WTC11 (cell line): ENCODE measurements at regions of chr3 and their contacts with region 1.

Region 1: GRCh38 chr3:151379083-151379734 is 5.3 kb downstream of the P2RY12 start:
- DNase-seq: peak; percentile 66
- ATAC-seq: peak; percentile 98
- H3K4me3 Mint-ChIP-seq: no peak overlapping the region
- H3K27ac Mint-ChIP-seq: peak overlapping the region; percentile 80
- H3K4me1 Mint-ChIP-seq: peaks cover 5% of the 10 kb centered on the region
- H3K27me3 Mint-ChIP-seq: no peaks in the 10 kb centered on the region
- CTCF ChIP-seq: no peak

Region 2: DNA sequence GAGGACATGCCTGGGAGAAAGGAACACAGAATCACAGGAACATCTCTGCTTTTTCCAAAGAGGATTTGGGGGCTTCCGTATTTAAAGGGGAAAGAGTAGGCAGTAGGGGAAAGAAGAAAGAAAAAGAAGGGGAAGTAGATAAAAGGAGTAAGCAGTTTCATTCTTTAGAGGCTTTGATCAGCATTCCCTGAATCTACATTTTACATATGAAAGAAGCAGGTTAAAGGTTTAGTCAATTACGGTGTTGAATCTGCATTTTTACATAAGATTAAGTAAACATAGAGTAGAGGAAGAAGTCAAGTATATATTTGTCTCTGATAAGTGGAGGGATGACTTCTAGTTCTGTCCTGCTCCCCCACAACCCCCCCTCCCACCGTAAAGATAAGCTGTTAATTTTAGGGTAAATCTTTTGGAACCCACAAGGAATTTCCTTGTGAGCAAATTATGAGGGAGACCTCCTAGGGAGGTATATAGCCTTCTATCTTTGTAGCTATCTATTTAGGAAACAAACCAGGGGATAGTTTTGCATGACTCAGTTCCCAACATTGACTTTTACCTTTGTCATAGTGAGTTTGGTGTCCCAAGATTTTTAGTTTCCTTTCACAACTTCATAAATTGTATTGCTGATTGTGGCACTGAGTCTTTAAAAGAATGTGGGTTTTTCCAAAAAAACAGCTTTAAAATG is 14.1 kb after region 1 on chr3:
- CTCF ChIA-PET with region 1: interaction called, 17 read pairs
- POLR2A ChIA-PET with region 1: interaction called, 5 read pairs
- DNase-seq: no peak
- ATAC-seq: peak; percentile 77
- H3K4me3 Mint-ChIP-seq: peak overlapping the region; percentile 48
- H3K27ac Mint-ChIP-seq: peak overlapping the region; percentile 98
- H3K4me1 Mint-ChIP-seq: peaks cover 52% of the 10 kb centered on the region
- H3K27me3 Mint-ChIP-seq: no peaks in the 10 kb centered on the region; the same call in 1 of the 2 replicates
- CTCF ChIP-seq: no peak

Region 3: GRCh38 chr3:151398895-151399294 is 19.7 kb after region 1 on chr3:
- CTCF ChIA-PET with region 1: interaction called, 17 read pairs
- POLR2A ChIA-PET with region 1: interaction called, 5 read pairs
- DNase-seq: no peak
- ATAC-seq: no peak
- H3K4me3 Mint-ChIP-seq: no peak overlapping the region
- H3K27ac Mint-ChIP-seq: no peak overlapping the region
- H3K4me1 Mint-ChIP-seq: peaks cover 41% of the 10 kb centered on the region
- H3K27me3 Mint-ChIP-seq: no peaks in the 10 kb centered on the region
- CTCF ChIP-seq: no peak